ENCODE measurements at regions of chr15 and their contacts with region 1.

Region 1: GRCh38 chr15:73683777-73684580 is at the start of gene CD276:
- DNase-seq: peak; percentile 63 to 93
- H3K4me3 ChIP-seq: peak within 1 kb of the TSS; percentile 67
- CTCF ChIP-seq: no peak
- POLR2A ChIP-seq: no peak
- total RNA-seq, gene CD276: 33.4 to 49.9 (median 45.4) TPM

Region 2: GRCh38 chr15:73403171-73403570 is 280.8 kb before region 1 on chr15:
- intact Hi-C with region 1: no loop called
- DNase-seq: no peak
- H3K4me3 ChIP-seq: no peak overlapping the region
- CTCF ChIP-seq: no peak
- POLR2A ChIP-seq: no peak

Region 3: GRCh38 chr15:73633111-73633990 is 50.6 kb before region 1 on chr15 and contains the start of gene NPTN:
- intact Hi-C with region 1: loop called (anchors 10 kb)
- DNase-seq: peak; percentile 98 to 99
- H3K4me3 ChIP-seq: peak within 1 kb of the TSS; percentile 94
- CTCF ChIP-seq: no peak
- POLR2A ChIP-seq: no peak
- total RNA-seq, gene NPTN: 124 to 181 (median 150) TPM

Region 4: GRCh38 chr15:74468341-74469032 is 784.5 kb after region 1 on chr15:
- intact Hi-C with region 1: loop called (anchors 5 kb)
- DNase-seq: peak in 1 of 2 donors; percentile 0
- H3K4me3 ChIP-seq: no peak overlapping the region
- CTCF ChIP-seq: no peak
- POLR2A ChIP-seq: no peak

Measured in lower leg skin (tissue), 4 donors.